Ovary (tissue), 10 donors: ENCODE measurements at regions of chr2 and their contacts with region 1.

Region 1: GRCh38 chr2:98608116-98608999 is at the starts of genes COA5 and UNC50:
- DNase-seq: peak; percentile 86 to 93 (median 91)
- H3K4me3 ChIP-seq: peak within 1 kb of the TSS; percentile 95
- H3K27ac ChIP-seq: peak within 1 kb of the TSS; percentile 82 to 93
- H3K4me1 ChIP-seq: peaks cover 18% of the 10 kb centered on the region
- H3K27me3 ChIP-seq: no peaks in the 10 kb centered on the region
- CTCF ChIP-seq: peak in 1 of 3 donors; percentile 30
- EP300 ChIP-seq: no peak
- POLR2A ChIP-seq: peak; percentile 81
- total RNA-seq, gene COA5: 27.2 to 35.4 (median 31.2) TPM
- total RNA-seq, gene UNC50: 32.2 to 50.0 (median 42.4) TPM

Region 2: GRCh38 chr2:98455494-98455976 is 152.8 kb before region 1 on chr2:
- intact Hi-C with region 1: loop called in 1 of 4 experiments (anchors 10 kb)
- DNase-seq: no peak
- H3K4me3 ChIP-seq: no peak overlapping the region
- H3K27ac ChIP-seq: no peak overlapping the region
- H3K4me1 ChIP-seq: no peaks in the 10 kb centered on the region
- H3K27me3 ChIP-seq: no peaks in the 10 kb centered on the region
- CTCF ChIP-seq: no peak
- EP300 ChIP-seq: no peak
- POLR2A ChIP-seq: no peak

Region 3: DNA sequence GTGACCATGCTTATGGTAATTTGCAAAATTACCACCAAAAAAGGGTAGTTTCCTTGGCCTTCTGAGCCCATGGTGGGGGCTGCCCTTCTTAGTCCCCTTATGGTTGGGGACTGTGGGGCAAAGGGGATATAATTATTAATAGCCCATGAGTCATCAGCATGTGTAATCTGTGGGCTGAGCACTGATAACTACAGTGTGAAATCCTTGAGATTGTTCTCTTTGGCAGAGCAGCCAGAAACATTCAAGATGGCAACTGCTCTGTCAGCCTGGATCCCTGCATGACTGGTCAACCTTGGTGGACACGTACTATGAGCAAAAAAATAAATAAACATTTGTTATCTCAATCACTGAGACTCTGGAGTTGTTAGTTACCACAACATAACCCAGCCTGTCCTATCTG is 61.3 kb after region 1 on chr2:
- intact Hi-C with region 1: no loop called
- DNase-seq: no peak
- H3K4me3 ChIP-seq: no peak overlapping the region
- H3K27ac ChIP-seq: no peak overlapping the region
- H3K4me1 ChIP-seq: no peaks in the 10 kb centered on the region
- H3K27me3 ChIP-seq: no peaks in the 10 kb centered on the region
- CTCF ChIP-seq: no peak
- EP300 ChIP-seq: no peak
- POLR2A ChIP-seq: no peak

Region 4: GRCh38 chr2:98713332-98714015 is 105.1 kb after region 1 on chr2:
- intact Hi-C with region 1: no loop called
- DNase-seq: no peak
- H3K4me3 ChIP-seq: no peak overlapping the region
- H3K27ac ChIP-seq: no peak overlapping the region
- H3K4me1 ChIP-seq: peaks cover 3% of the 10 kb centered on the region
- H3K27me3 ChIP-seq: no peaks in the 10 kb centered on the region
- CTCF ChIP-seq: no peak
- EP300 ChIP-seq: no peak
- POLR2A ChIP-seq: no peak